ENCODE measurements at regions of chr11 and their contacts with region 1.

Region 1: GRCh38 chr11:64000026-64000739 is 13.9 kb downstream of the OTUB1 start:
- DNase-seq: peak; percentile 71
- H3K4me3 Mint-ChIP-seq: no peak overlapping the region
- H3K27ac Mint-ChIP-seq: no peak overlapping the region
- H3K4me1 Mint-ChIP-seq: no peaks in the 10 kb centered on the region
- H3K27me3 Mint-ChIP-seq: no peaks in the 10 kb centered on the region

Region 2: GRCh38 chr11:63986156-63986931 is 13.8 kb before region 1 on chr11 and contains the start of gene OTUB1:
- intact Hi-C with region 1: loop called (anchors 1 kb)
- DNase-seq: peak; percentile 86
- H3K4me3 Mint-ChIP-seq: peak within 1 kb of the TSS; percentile 97
- H3K27ac Mint-ChIP-seq: peak within 1 kb of the TSS; percentile 96
- H3K4me1 Mint-ChIP-seq: peaks cover 32% of the 10 kb centered on the region
- H3K27me3 Mint-ChIP-seq: no peaks in the 10 kb centered on the region
- total RNA-seq, gene OTUB1: 104 and 114 TPM in 2 replicates

Region 3: GRCh38 chr11:64060861-64061444 is 60.8 kb after region 1 on chr11:
- intact Hi-C with region 1: loop called (anchors 1 kb)
- DNase-seq: peak; percentile 56
- H3K4me3 Mint-ChIP-seq: peak overlapping the region; percentile 81
- H3K27ac Mint-ChIP-seq: no peak overlapping the region
- H3K4me1 Mint-ChIP-seq: peaks cover 5% of the 10 kb centered on the region
- H3K27me3 Mint-ChIP-seq: peaks cover 13% of the 10 kb centered on the region

Region 4: GRCh38 chr11:64152841-64153691 is 152.9 kb after region 1 on chr11:
- intact Hi-C with region 1: loop called (anchors 1 kb)
- DNase-seq: peak; percentile 72
- H3K4me3 Mint-ChIP-seq: no peak overlapping the region
- H3K27ac Mint-ChIP-seq: no peak overlapping the region
- H3K4me1 Mint-ChIP-seq: no peaks in the 10 kb centered on the region
- H3K27me3 Mint-ChIP-seq: no peaks in the 10 kb centered on the region

Measured in activated T-helper 1 cell treated with anti-CD3 and anti-CD28 coated beads, Interleukin-12 subunit alpha, Interleukin-12 subunit beta, Interleukin-2, Interleukin-4 antibody, amounts not matched to agents 30 ng/mL and 10 ng/mL and 1 ng/mL, durations not matched to agents 14 hours and 24 hours and 36 hours (primary cell).